A673 (cell line): ENCODE measurements at regions of chr12 and their contacts with region 1.

Region 1: DNA sequence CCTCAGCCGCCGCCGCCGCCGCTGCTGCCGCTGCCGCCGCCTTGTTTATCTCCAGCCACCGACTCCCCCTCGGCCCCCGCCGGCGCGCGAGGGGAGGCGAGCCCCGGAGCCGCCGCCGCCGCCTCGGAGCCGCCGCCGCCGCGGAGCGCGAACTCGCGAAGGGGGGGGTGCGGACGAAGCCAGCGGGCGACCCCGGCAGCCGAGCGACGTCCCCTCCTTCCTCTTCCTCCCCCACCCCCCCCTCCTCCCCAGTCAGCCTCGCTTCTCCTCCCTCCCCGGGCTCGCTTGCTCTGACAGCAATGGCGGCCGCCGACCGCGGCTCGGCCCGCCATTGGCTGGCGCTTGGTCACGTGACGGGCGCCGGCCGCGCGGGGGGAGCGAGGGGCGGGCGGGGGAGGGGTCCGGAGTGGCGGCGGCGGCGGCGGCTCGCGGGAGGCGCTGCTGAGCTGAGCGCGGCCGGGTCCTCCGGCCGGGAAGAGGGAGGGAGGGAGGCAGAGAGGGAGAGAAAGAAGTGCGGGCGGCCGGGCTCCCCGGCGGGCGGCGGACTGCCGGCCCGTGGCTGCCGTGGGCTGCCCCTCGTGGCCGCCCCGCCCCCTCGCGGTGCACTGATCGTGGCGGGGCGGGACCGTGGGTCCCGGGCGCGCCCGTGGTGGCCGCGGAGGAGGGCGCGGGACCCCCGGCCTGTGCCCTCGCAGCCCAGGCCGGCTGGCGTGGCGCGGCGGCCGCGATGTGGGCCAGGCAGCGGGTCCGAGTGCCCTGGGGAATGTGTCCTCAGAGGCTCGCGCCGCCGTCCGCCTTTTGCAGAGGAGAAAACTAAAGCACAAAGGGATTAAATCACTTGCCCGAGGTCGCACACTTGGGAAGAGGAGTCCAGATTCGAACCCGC is at the start of gene MED13L:
- DNase-seq: peak; percentile 94
- H3K4me3 ChIP-seq: peak within 1 kb of the TSS; percentile 67
- H3K27ac ChIP-seq: peak within 1 kb of the TSS; percentile 82
- H3K4me1 ChIP-seq: peaks cover 24% of the 10 kb centered on the region
- H3K27me3 ChIP-seq: no peaks in the 10 kb centered on the region
- CTCF ChIP-seq: 0 out of 2 replicates have a peak, but pooled peaks have one; percentile 18
- total RNA-seq, gene MED13L: 88.0 and 94.1 TPM in 2 replicates

Region 2: GRCh38 chr12:115910057-115910456 is 367.6 kb before region 1 on chr12:
- CTCF ChIA-PET with region 1: no interaction called
- POLR2A ChIA-PET with region 1: no interaction called
- intact Hi-C with region 1: no loop called
- DNase-seq: no peak
- H3K4me3 ChIP-seq: no peak overlapping the region
- H3K27ac ChIP-seq: no peak overlapping the region
- H3K4me1 ChIP-seq: no peaks in the 10 kb centered on the region
- H3K27me3 ChIP-seq: no peaks in the 10 kb centered on the region
- CTCF ChIP-seq: no peak

Region 3: GRCh38 chr12:116066381-116067230 is 211.0 kb before region 1 on chr12:
- CTCF ChIA-PET with region 1: no interaction called
- POLR2A ChIA-PET with region 1: no interaction called
- intact Hi-C with region 1: loop called (anchors 5 kb)
- DNase-seq: peak; percentile 66
- H3K4me3 ChIP-seq: no peak overlapping the region
- H3K27ac ChIP-seq: no peak overlapping the region
- H3K4me1 ChIP-seq: peaks cover 30% of the 10 kb centered on the region
- H3K27me3 ChIP-seq: no peaks in the 10 kb centered on the region
- CTCF ChIP-seq: peak; percentile 95

Region 4: DNA sequence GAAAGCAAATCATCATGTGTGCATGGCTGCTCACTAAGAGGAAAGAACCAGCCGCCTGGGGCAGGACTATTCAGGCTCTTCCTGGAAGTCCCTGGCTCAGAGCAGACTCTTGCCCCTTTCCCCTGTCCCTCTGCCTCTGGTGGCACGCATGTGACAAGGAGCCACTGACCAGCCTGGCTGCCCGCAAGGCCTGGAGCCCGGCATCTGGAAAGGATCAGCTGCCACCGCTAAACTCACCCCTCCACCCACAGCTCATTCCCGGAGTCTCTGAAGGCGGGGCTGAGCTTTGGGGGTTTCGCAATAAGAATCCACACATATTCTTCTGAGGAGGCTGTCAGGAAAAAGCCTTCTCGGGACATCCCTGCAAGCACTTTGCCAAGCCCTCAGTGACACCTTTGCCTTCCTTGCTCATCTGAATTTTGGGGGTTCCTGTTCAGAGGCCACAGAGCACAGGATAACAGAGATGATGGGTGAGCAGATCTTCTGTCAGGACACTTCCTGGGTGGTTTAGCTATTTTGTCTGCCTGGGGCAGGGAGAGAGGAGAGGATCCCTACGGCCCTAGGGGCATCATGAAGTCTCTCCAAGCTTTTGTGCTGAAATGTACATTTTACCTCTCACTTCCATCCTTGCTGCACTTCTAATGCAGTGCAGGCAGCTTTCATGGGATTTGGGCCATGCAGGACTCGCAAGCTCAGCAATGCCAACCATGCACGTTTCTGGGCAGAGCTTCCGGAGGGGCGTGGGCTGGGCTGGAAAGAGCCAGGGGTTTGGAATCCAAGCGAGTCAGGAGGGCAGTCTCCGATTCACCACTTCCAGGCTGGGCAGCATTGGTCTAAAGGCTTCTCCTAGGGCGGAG is 156.7 kb after region 1 on chr12:
- CTCF ChIA-PET with region 1: no interaction called
- POLR2A ChIA-PET with region 1: no interaction called
- intact Hi-C with region 1: loop called (anchors 1 kb)
- DNase-seq: peak; percentile 88
- H3K4me3 ChIP-seq: peak overlapping the region; percentile 29
- H3K27ac ChIP-seq: peak overlapping the region; percentile 31
- H3K4me1 ChIP-seq: peaks cover 11% of the 10 kb centered on the region
- H3K27me3 ChIP-seq: no peaks in the 10 kb centered on the region
- CTCF ChIP-seq: no peak

Region 5: DNA sequence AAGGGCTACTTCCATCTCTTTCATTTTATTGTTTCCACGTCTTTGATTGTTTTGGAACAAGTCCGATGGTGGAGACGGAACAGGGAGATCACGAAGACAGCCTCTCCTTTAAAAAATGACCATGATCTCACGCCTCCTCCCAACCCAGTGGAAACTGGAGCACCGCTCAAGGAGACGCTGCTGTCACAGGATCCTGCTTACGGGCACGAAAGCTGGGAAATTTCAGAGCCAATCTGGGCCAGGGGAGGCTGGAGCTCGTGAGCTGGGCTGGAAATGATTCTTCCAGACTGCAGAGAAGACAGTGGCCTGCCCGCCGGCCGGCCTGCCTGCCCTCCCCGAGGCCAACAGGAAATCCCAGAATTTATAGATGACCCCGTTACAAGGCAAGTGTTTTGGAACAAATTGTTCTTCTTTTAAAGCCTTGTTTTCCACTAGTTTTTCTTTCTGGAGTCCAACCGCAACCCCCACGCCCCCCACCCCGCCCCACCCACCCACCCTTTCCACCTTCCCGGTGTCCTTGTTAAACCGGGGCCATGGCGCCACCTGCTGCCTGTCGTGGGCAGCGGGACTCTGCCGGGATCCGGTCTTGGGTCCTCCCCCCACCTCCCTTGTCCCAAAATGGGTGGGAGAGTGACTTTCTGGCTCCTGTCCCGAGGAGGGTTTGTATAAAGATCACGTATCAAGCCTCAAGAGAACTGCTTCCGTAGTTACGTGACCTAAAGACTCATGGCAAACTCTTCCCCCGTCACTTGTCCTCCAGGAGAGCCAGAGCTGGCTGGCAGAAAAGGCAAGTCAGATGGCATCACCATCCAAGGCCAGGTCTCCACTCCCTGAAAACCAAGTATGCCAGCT is 321.9 kb after region 1 on chr12:
- CTCF ChIA-PET with region 1: no interaction called
- POLR2A ChIA-PET with region 1: interaction called, 3 read pairs
- intact Hi-C with region 1: loop called (anchors 5 kb)
- DNase-seq: peak; percentile 83
- H3K4me3 ChIP-seq: no peak overlapping the region
- H3K27ac ChIP-seq: no peak overlapping the region
- H3K4me1 ChIP-seq: peaks cover 37% of the 10 kb centered on the region
- H3K27me3 ChIP-seq: no peaks in the 10 kb centered on the region
- CTCF ChIP-seq: peak; percentile 63